Sciatic nerve (tissue), 2 donors: ENCODE measurements at regions of chr16 and their contacts with region 1.

Region 1: GRCh38 chr16:12067714-12068401 is 91.3 kb downstream of the SNX29 start:
- DNase-seq: peak; percentile 64
- ATAC-seq: peak; percentile 76

Region 2: DNA sequence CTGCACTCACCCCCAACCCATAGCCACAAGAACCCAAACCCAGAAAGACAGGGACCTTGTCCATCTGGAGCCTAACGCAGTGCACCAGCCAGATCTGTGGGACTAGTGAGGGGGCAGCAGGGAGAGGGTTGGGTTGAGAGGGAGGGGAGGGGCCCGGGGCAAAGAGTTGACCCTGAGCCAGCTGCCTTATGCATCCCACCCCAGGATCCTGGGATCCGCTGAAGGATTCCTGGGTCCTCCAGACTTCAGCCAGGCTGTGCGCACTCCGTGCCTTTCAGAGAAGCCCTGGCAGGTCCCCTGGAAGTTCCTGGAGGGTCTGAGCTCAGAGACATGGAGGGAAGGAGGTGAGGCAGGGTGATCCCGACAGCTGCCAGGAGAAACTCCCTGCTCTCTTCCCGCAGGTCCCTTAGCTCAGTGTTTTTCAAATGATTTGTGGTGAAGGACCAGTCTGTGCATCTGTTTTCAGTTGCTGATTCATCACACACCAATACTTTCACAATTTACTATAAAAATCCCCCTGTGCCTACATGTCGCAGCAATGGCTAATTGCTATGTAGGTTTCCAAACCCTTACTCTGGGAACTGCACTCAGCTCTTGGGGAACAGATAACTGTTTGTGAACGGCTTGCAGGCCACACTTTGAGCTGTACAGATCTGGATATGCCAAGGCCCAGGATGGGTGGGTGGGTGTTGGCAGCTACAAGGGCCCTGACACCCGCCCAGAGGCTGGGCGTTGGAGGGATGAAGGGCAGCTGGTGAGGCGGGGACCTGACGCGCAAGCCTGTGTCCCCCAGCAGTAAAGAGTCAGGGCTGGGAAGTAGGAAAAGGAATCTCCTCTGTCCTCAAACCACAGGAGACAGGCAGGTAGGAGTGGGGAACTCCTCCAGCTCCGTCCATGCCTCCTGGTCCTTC is 1467.1 kb before region 1 on chr16:
- intact Hi-C with region 1: no loop called
- DNase-seq: no peak
- ATAC-seq: peak; percentile 50

Region 3: GRCh38 chr16:11977376-11978041 is 90.3 kb before region 1 on chr16:
- intact Hi-C with region 1: loop called (anchors 10 kb)
- DNase-seq: no peak
- ATAC-seq: peak; percentile 69

Region 4: DNA sequence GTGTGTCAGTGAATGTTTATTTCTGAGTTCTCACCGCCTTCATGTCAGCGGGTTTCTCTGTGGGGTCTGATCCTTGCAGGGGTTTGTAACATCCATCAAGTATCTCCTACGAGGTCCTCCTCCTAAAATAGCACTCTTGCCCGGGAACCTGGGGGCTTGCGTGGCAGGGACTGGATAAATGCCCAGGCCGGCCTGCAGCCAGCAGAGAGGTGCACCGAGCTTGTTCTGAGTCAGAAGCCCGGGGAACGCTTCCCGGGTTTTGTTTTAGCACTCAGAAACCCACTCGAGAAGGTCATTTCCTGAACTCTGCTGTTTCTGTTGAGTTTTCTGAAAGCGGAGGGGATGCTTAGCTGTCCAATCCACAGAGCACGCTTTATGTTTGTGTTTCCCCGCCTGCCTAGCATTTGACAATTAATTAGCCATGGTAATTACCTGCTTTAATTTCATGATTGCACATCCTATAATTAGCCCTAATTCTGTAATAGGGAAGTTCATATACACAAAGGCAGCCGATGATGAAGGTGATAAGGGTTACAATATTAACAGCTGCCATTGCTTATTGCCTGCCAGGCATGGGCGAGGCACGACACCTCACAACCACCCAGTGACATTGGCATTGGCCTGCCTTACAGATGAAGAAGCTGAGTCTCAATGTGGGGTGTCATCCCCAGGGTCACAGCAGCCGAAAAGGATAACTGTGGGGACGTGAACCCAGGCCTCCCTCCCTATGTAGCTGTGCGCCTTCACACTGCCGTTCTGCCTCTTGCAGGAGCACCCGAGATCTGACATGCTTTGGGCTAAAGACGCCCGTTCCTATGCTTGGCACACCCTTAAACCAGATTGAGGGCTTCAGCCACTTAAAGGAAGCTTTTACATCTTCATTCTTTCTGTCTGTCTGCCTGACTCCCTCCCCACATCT is 402.7 kb after region 1 on chr16:
- intact Hi-C with region 1: no loop called
- DNase-seq: no peak
- ATAC-seq: no peak